Activated CD4-positive, alpha-beta T cell treated with anti-CD3 and anti-CD28 coated beads, Interleukin-2, amount 10 ng/mL, durations not matched to agents 24 days and 14 days (primary cell): ENCODE measurements at regions of chr11 and their contacts with region 1.

Region 1: DNA sequence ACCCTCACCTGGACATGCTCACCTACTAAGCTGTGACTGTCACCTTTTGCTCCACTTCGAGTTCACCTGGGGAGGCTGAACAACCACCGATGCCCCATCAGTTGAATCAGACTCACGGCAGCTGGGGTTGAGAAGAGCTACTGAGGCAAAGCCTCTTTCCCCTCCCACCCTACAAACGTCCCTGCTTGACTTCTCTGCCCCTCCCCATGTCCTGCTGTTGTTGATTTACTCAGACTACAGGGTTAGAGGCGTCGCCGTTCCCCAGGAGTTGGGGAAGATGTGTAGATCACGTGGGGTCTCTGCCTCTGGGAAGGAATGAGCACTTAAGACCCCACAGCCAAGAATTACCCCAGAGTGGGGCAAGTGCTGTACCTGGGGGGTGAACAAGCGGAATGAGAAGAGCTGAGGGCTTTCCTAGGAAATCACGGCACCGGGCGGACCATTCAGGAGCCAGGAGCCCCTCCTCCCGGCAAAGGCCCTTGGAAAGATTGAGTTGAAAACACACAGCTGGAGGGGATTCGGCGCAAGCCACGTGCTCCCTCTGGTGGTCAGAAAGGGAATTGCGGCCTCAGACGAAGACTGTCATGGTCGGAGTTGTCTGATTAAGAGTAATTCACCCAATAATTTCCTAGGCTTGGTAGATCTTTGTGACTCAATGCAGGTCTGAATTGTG is 7.0 kb downstream of the FXYD2 start:
- DNase-seq: peak; percentile 96
- H3K4me3 Mint-ChIP-seq: peak overlapping the region; percentile 79
- H3K27ac Mint-ChIP-seq: peak overlapping the region; percentile 99
- H3K4me1 Mint-ChIP-seq: peaks cover 63% of the 10 kb centered on the region
- H3K27me3 Mint-ChIP-seq: peaks cover 2% of the 10 kb centered on the region

Region 2: GRCh38 chr11:116772443-116773202 is 1044.9 kb before region 1 on chr11 and contains the start of gene BUD13:
- intact Hi-C with region 1: loop called (anchors 10 kb)
- DNase-seq: peak; percentile 99
- H3K4me3 Mint-ChIP-seq: peak within 1 kb of the TSS; percentile 91
- H3K27ac Mint-ChIP-seq: peak within 1 kb of the TSS; percentile 95
- H3K4me1 Mint-ChIP-seq: peaks cover 46% of the 10 kb centered on the region
- H3K27me3 Mint-ChIP-seq: no peaks in the 10 kb centered on the region
- total RNA-seq, gene BUD13: 31.5 and 33.2 TPM in 2 replicates

Region 3: DNA sequence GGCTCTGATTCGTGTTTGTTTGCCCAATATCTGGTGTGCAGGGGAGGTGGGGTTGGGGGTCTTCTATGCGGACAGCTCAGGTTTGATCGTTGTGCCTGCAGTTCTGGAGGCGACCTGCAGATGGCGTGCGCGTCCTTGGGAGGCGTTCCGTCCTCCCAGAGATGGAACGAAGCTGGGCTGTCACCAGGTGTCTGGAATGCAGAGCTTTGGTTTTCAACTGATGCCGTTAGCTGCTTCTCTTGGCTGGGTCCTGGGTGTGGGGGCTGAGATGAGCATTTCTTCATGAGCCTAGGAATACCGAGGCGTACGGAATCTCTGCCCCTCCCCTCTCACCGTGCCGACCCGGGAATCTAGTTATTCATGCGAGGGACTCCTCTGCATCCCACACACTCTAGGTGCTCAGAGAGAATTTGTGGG is 391.2 kb before region 1 on chr11:
- intact Hi-C with region 1: loop called (anchors 2 kb)
- DNase-seq: peak; percentile 91
- H3K4me3 Mint-ChIP-seq: no peak overlapping the region
- H3K27ac Mint-ChIP-seq: no peak overlapping the region
- H3K4me1 Mint-ChIP-seq: no peaks in the 10 kb centered on the region
- H3K27me3 Mint-ChIP-seq: peaks cover 6% of the 10 kb centered on the region

Region 4: GRCh38 chr11:117720061-117720511 is 97.4 kb before region 1 on chr11:
- intact Hi-C with region 1: no loop called
- DNase-seq: no peak
- H3K4me3 Mint-ChIP-seq: no peak overlapping the region
- H3K27ac Mint-ChIP-seq: no peak overlapping the region
- H3K4me1 Mint-ChIP-seq: no peaks in the 10 kb centered on the region
- H3K27me3 Mint-ChIP-seq: peaks cover 8% of the 10 kb centered on the region

Region 5: DNA sequence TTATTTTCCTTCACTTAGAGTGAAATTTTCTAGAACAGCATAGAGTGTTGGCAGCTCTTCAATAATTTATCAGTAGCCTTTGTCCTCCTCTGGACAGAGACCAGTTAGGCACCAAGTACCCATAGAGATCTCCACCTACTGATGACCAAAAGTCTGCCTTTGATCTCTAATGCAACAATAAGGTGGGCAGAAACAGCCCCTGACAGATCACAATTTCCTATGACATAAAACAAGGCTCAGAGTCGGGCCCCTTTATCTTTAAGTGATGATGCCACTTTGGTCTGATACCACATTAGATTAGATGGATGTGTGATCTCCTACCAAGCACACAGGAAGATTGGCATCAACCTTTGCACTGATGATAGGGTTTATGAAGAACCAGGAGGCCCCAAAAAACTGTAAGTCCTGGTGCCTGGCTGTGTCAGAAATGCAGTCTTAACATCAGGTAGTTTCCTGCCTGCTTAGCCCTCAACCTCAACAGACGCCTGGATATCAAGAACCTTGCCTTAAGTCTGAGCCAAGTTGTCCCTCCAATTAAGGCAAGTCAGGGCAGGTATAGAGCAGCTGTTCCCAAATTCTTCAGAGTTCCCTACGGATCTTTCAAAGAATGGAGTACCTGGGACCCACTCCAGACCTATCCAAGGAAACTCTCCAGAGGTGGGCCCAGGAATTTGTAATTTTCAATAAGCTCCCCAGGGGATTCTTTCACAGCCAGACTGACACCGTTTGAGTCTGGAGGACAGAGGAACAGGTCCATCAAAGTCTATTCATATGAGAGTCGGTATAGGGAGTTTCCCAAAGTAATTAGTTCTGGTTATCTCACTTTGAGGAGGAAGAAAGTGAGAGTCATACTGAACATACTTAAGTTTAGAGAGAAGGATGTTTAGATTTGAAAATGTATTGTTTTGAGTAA is 228.8 kb after region 1 on chr11:
- intact Hi-C with region 1: loop called (anchors 2 kb)
- DNase-seq: peak; percentile 76
- H3K4me3 Mint-ChIP-seq: peak overlapping the region; percentile 51
- H3K27ac Mint-ChIP-seq: peak overlapping the region; percentile 87
- H3K4me1 Mint-ChIP-seq: peaks cover 75% of the 10 kb centered on the region
- H3K27me3 Mint-ChIP-seq: no peaks in the 10 kb centered on the region

Region 6: GRCh38 chr11:118338637-118339061 is 521.1 kb after region 1 on chr11:
- intact Hi-C with region 1: loop called (anchors 10 kb)
- DNase-seq: peak; percentile 97
- H3K4me3 Mint-ChIP-seq: peak overlapping the region; percentile 90
- H3K27ac Mint-ChIP-seq: peak overlapping the region; percentile 100
- H3K4me1 Mint-ChIP-seq: peaks cover 65% of the 10 kb centered on the region
- H3K27me3 Mint-ChIP-seq: no peaks in the 10 kb centered on the region